Activated CD4-positive, alpha-beta T cell treated with anti-CD3 and anti-CD28 coated beads, Interleukin-2, amount 10 ng/mL, durations not matched to agents 24 days and 14 days (primary cell): ENCODE measurements at regions of chr1 and their contacts with region 1.

Region 1: DNA sequence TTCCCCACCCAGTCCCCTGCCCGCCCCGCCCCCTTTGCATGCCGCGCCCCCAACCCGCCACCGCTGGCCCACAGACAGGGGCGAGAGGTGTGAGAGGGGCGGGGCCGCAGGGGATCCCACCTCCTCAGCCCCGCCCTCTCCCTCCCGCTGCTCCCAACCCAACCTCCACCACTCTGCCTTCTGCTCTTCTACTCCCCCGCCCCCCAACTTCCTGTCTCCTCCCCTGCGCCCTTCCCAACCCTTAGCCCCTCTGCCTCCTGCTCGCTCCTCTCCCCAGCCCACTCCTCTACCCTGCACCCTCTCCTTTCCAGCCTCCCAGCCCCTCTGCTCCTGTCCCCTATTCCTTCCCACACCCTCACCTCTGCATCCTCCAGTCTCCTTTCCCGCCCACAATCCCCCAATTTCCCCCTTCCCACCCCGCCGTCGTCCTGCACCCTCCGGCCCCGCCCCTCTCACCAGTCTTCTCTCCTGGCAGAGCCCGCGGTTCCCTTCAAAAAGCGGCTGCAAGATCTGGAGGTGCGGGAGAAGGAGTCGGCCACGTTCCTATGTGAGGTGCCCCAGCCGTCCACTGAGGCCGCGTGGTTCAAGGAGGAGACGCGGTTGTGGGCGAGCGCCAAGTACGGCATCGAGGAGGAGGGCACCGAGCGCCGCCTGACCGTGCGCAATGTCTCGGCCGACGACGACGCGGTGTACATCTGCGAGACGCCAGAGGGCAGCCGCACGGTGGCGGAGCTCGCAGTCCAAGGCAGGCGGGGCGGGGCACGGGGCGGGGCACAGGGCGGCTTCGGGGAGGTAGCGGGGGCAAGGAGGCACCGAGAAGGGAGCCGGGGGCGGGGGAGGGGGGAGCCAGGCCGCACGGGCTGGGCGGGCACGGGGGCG is 5.4 kb downstream of the OBSCN start:
- DNase-seq: peak; percentile 95
- H3K4me3 Mint-ChIP-seq: peak overlapping the region; percentile 95
- H3K27ac Mint-ChIP-seq: peak overlapping the region; percentile 91
- H3K4me1 Mint-ChIP-seq: peaks cover 7% of the 10 kb centered on the region
- H3K27me3 Mint-ChIP-seq: no peaks in the 10 kb centered on the region

Region 2: GRCh38 chr1:228131766-228132165 is 81.4 kb before region 1 on chr1:
- intact Hi-C with region 1: loop called (anchors 1 kb)
- DNase-seq: no peak
- H3K4me3 Mint-ChIP-seq: no peak overlapping the region
- H3K27ac Mint-ChIP-seq: no peak overlapping the region
- H3K4me1 Mint-ChIP-seq: peaks cover 8% of the 10 kb centered on the region
- H3K27me3 Mint-ChIP-seq: peaks cover 40% of the 10 kb centered on the region

Region 3: GRCh38 chr1:228275739-228276421 is 62.7 kb after region 1 on chr1:
- intact Hi-C with region 1: loop called (anchors 1 kb)
- DNase-seq: peak; percentile 96
- H3K4me3 Mint-ChIP-seq: peak overlapping the region; percentile 80
- H3K27ac Mint-ChIP-seq: peak overlapping the region; percentile 34
- H3K4me1 Mint-ChIP-seq: peaks cover 6% of the 10 kb centered on the region
- H3K27me3 Mint-ChIP-seq: no peaks in the 10 kb centered on the region

Region 4: DNA sequence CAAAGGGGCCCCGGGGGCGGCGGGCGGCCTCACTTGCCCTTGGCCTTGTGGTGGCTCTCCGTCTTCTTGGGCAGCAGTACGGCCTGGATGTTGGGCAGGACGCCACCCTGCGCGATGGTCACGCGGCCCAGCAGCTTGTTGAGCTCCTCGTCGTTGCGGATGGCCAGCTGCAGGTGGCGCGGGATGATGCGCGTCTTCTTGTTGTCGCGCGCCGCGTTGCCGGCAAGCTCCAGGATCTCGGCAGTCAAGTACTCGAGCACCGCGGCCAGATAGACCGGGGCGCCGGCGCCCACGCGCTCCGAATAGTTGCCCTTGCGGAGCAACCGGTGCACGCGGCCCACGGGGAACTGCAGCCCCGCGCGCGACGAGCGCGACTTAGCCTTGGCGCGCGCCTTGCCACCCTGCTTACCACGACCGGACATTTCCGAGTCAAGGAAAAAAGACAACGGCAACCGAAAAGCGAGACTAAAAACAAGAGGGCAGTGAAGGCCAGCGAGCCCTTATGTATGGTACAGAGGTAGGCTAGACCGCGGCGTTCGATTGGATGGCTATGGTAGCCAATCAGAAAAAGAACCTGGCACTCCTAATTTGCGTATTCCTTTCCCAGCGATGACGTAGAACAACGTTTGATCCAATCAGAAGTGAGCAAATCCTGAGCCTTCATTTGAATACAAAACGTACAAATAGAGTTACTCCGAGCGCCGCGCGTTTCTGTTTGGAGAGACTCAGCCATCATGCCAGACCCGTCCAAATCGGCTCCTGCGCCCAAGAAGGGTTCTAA is 244.4 kb after region 1 on chr1:
- intact Hi-C with region 1: loop called (anchors 5 kb)
- DNase-seq: peak; percentile 97
- H3K4me3 Mint-ChIP-seq: peak overlapping the region; percentile 97
- H3K27ac Mint-ChIP-seq: peak overlapping the region; percentile 99
- H3K4me1 Mint-ChIP-seq: peaks cover 47% of the 10 kb centered on the region
- H3K27me3 Mint-ChIP-seq: peaks cover 3% of the 10 kb centered on the region